ENCODE measurements at regions of chr12 and their contacts with region 1.

Region 1: DNA sequence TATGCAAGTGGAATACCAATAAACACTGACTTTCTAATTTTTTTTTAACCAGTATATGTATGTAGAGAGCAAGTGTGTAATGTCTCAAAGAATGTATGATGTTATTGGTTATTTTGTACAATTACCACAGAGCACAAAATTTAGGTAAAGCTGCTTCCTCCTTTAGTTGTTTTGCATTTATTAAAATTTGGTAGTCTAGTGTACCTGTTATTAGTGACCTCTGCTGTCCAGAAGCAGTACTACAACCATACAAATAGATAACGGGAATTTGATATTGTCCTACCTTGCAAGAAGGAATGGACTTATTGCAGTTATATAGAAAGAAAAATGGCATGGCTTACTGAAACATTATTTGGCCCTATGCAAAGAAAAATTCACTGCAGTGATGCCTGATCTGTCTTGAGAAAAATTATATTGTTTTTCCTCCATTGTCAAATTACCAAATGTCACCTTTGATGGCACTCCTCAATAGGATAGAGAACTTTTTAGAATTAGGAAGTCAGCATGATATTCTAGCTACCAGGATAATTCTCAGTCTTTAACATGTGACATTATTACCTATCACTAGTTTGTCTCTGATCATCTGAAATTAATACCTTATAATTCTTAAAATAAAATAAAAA is 153.9 kb upstream of the RMST start:
- DNase-seq: no peak
- ATAC-seq: no peak

Region 2: GRCh38 chr12:96578526-96579125 is 730.1 kb before region 1 on chr12:
- intact Hi-C with region 1: loop called (anchors 5 kb)
- DNase-seq: no peak
- ATAC-seq: no peak

Measured in left ventricle myocardium superior (tissue), 1 donor.